ENCODE measurements at regions of chr4 and their contacts with region 1.

Region 1: GRCh38 chr4:139509727-139510410 is 46.1 kb downstream of the SETD7 start:
- DNase-seq: peak; percentile 47
- ATAC-seq: peak; percentile 91
- H3K4me3 Mint-ChIP-seq: no peak overlapping the region
- H3K27ac Mint-ChIP-seq: no peak overlapping the region; the same call in 1 of the 2 replicates
- H3K4me1 Mint-ChIP-seq: peaks cover 15% of the 10 kb centered on the region
- H3K27me3 Mint-ChIP-seq: no peaks in the 10 kb centered on the region
- CTCF ChIP-seq: no peak

Region 2: DNA sequence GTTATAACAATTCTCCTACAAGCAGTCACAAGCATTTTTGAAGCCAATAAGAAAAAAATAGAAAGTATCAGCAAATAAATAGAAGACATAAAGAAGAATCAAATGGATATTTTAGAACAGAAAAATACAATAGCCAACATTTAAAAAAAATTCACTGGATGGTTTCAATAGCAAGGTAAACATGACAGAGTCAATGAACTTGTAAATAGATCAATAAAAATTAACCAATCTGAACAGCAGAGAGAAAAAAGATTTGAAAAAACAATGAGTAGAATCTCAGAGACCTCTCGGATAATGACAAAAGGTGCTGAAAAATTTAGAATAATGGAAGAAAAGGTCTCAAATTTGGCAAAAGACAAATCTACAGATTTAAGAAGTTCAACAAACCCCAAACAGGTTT is 89.2 kb before region 1 on chr4:
- CTCF ChIA-PET with region 1: no interaction called
- POLR2A ChIA-PET with region 1: no interaction called
- DNase-seq: no peak
- ATAC-seq: no peak
- H3K4me3 Mint-ChIP-seq: no peak overlapping the region
- H3K27ac Mint-ChIP-seq: no peak overlapping the region
- H3K4me1 Mint-ChIP-seq: no peaks in the 10 kb centered on the region
- H3K27me3 Mint-ChIP-seq: no peaks in the 10 kb centered on the region; the same call in 1 of the 2 replicates
- CTCF ChIP-seq: no peak

Region 3: DNA sequence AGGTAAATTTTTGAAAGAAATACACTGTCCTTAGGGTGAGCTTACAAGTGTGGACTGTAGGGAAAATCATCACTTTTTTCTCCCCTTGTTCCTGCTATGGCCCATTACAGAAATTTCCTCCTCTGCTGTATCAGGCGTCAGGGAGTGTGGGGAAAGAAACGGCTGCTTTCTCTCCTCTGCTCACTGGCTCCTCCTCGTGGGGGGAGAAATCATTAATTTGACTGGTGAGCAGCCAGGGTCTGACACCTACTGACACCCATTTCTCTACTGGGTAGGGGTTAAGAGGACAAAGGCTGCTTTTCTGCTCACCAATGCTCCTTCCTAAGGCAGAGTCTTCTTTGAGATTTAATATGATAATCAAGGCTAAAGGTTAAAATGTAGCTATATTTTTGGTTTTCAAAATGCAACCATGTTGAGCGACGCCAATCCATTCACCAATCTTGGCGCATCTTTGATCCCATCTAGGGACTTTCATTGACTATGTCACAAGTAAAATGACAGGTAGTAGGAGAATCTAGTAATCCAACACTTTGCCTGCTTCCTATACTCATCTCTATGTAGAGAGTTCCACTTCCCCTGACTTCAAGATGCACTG is 21.1 kb after region 1 on chr4:
- CTCF ChIA-PET with region 1: interaction called, 21 read pairs
- POLR2A ChIA-PET with region 1: no interaction called
- DNase-seq: peak; percentile 76
- ATAC-seq: peak; percentile 98
- H3K4me3 Mint-ChIP-seq: no peak overlapping the region
- H3K27ac Mint-ChIP-seq: no peak overlapping the region
- H3K4me1 Mint-ChIP-seq: no peaks in the 10 kb centered on the region
- H3K27me3 Mint-ChIP-seq: no peaks in the 10 kb centered on the region
- CTCF ChIP-seq: peak; percentile 41; the same call in 1 of the 2 replicates

Region 4: GRCh38 chr4:139554893-139555704 is 45.2 kb after region 1 on chr4:
- CTCF ChIA-PET with region 1: interaction called, 14 read pairs
- POLR2A ChIA-PET with region 1: interaction called, 3 read pairs
- DNase-seq: peak; percentile 71
- ATAC-seq: peak; percentile 12
- H3K4me3 Mint-ChIP-seq: peak overlapping the region; percentile 83
- H3K27ac Mint-ChIP-seq: no peak overlapping the region
- H3K4me1 Mint-ChIP-seq: peaks cover 49% of the 10 kb centered on the region
- H3K27me3 Mint-ChIP-seq: peaks cover 63% of the 10 kb centered on the region
- CTCF ChIP-seq: no peak

Measured in WTC11 (cell line).